CD8-positive, alpha-beta T cell (primary cell): ENCODE measurements at regions of chr1 and their contacts with region 1.

Region 1: DNA sequence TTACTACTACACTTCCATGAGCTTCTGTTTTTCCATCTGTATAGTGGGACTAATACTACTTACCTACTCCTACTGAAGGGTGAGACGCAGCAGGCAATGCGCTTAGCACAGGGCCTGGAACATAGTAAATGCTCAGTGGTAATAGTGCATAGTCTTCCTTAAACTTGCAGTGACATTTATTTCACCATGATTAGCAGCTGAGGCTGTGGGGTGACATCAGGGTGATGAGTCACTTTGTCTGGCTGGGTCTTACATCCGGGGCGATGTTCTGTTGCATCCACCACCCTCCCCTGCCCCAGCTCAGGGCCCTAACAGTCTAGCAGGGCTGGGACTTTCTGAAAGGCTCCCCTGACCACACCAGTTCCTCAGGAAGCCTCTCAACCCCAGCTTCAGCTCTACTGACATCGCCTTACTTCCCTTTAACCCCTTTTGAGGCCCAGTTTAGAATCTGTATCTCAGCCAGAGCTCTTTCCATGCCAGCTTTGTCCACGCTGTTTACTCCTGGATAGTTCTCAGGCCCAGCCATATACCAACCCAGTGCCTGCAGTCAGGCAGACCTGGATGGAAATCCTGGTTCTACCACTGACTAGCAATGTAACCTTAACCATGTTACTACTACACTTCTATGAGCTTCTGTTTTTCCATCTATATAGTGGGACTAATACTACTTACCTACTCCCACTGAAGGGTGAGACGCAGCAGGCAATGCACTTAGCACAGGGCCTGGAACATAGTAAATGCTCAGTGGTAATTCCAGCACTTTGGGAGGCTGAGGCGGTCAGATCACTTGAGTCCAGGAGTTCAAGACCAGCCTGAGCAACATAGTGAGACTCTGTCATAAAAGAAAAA is 66.3 kb downstream of the CD58 start:
- DNase-seq: peak; percentile 71 to 97 (median 88)
- ATAC-seq: peak; percentile 93
- H3K4me3 ChIP-seq: no peak overlapping the region
- H3K4me3 Mint-ChIP-seq: peak overlapping the region; percentile 19
- H3K27ac ChIP-seq: peak overlapping the region; percentile 22 to 92
- H3K27ac Mint-ChIP-seq: peak overlapping the region; percentile 91
- H3K4me1 ChIP-seq: peaks cover 26% of the 10 kb centered on the region
- H3K4me1 Mint-ChIP-seq: peaks cover 42% of the 10 kb centered on the region
- H3K27me3 ChIP-seq: no peaks in the 10 kb centered on the region
- H3K27me3 Mint-ChIP-seq: no peaks in the 10 kb centered on the region
- CTCF ChIP-seq: no peak

Region 2: DNA sequence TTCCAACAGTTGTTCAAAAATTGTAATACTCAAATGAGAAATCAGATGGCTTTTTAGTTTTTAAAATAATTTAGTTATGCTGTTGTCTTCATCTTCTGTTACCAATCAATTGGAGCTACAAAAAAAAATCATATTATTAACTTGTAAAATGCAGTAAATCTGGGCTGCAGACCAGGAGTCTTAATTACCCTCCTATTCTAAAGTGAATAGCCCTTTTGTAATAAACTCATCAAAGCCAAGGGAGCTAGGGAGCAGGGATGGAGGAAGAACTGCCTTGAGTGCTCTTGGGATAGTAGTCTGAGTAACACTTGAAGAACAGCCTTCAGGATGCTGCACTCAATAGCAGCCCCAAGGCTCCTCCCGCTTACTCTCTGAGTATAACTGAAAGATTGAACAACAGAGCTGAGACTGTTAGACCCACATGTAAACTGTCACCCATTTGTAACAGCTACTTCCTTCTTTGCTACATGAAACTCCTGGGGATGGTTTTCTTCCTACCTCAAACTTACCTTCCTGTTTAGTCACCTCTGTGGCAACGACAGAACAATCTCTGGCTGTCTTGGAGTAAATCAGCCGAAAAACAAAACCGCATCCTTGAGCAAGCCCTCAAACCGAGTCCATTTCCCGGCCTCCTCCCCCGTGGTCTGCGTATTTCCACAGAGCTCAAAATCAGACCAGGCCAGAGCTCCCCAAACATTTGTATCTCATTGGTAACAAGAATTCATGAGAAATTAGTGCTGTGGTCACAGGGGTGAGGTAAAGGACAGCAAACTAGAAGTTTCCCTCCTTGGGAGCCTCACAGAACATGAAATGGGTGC is 10.4 kb after region 1 on chr1:
- CTCF ChIA-PET with region 1: interaction called, 8 read pairs
- POLR2A ChIA-PET with region 1: interaction called, 6 read pairs
- intact Hi-C with region 1: loop called (anchors 1 kb)
- DNase-seq: peak; percentile 28 to 89 (median 62)
- ATAC-seq: peak; percentile 83
- H3K4me3 ChIP-seq: peak overlapping the region; percentile 4 to 31
- H3K4me3 Mint-ChIP-seq: peak overlapping the region; percentile 61
- H3K27ac ChIP-seq: peak overlapping the region; percentile 50 to 96
- H3K27ac Mint-ChIP-seq: peak overlapping the region; percentile 94
- H3K4me1 ChIP-seq: peaks cover 29% of the 10 kb centered on the region
- H3K4me1 Mint-ChIP-seq: peaks cover 50% of the 10 kb centered on the region
- H3K27me3 ChIP-seq: no peaks in the 10 kb centered on the region
- H3K27me3 Mint-ChIP-seq: no peaks in the 10 kb centered on the region
- CTCF ChIP-seq: no peak

Region 3: GRCh38 chr1:116763787-116764465 is 259.4 kb after region 1 on chr1:
- CTCF ChIA-PET with region 1: no interaction called
- POLR2A ChIA-PET with region 1: no interaction called
- intact Hi-C with region 1: loop called in 1 of 2 experiments (anchors 10 kb)
- DNase-seq: peak in 4 of 9 experiments; percentile 45 to 74 (median 58)
- ATAC-seq: peak; percentile 10
- H3K4me3 ChIP-seq: peak overlapping the region; percentile 18 to 22
- H3K4me3 Mint-ChIP-seq: peak overlapping the region; percentile 75
- H3K27ac ChIP-seq: peak overlapping the region; percentile 57 to 87
- H3K27ac Mint-ChIP-seq: peak overlapping the region; percentile 96
- H3K4me1 ChIP-seq: peaks cover 96% of the 10 kb centered on the region
- H3K4me1 Mint-ChIP-seq: peaks cover 96% of the 10 kb centered on the region
- H3K27me3 ChIP-seq: no peaks in the 10 kb centered on the region
- H3K27me3 Mint-ChIP-seq: no peaks in the 10 kb centered on the region
- CTCF ChIP-seq: peak; percentile 22

Region 4: GRCh38 chr1:117664314-117664713 is 1159.8 kb after region 1 on chr1:
- CTCF ChIA-PET with region 1: no interaction called
- POLR2A ChIA-PET with region 1: no interaction called
- intact Hi-C with region 1: loop called in 1 of 2 experiments (anchors 10 kb)
- DNase-seq: peak in 7 of 9 experiments; percentile 30 to 96 (median 59)
- ATAC-seq: peak; percentile 77
- H3K4me3 ChIP-seq: no peak overlapping the region
- H3K4me3 Mint-ChIP-seq: no peak overlapping the region
- H3K27ac ChIP-seq: peak overlapping the region; percentile 44 to 84
- H3K27ac Mint-ChIP-seq: peak overlapping the region; percentile 85
- H3K4me1 ChIP-seq: peaks cover 53% of the 10 kb centered on the region
- H3K4me1 Mint-ChIP-seq: peaks cover 72% of the 10 kb centered on the region
- H3K27me3 ChIP-seq: no peaks in the 10 kb centered on the region
- H3K27me3 Mint-ChIP-seq: peaks cover 17% of the 10 kb centered on the region
- CTCF ChIP-seq: no peak